ENCODE measurements at regions of chr14 and their contacts with region 1.

Region 1: GRCh38 chr14:95319312-95320021 is at the start of gene CLMN:
- DNase-seq: no peak
- H3K4me3 ChIP-seq: peak within 1 kb of the TSS; percentile 52 to 83 (median 78)
- H3K27ac ChIP-seq: peak within 1 kb of the TSS; percentile 54 to 77 (median 72)
- H3K4me1 ChIP-seq: peaks cover 0 to 27% (median 14%) of the 10 kb centered on the region in 4 donors
- H3K27me3 ChIP-seq: no peaks in the 10 kb centered on the region
- CTCF ChIP-seq: no peak
- EP300 ChIP-seq: no peak
- POLR2A ChIP-seq: no peak
- total RNA-seq, gene CLMN: 3.5 to 9.1 (median 5.1) TPM

Region 2: GRCh38 chr14:95157327-95158189 is 161.9 kb before region 1 on chr14 and contains the start of gene DICER1:
- intact Hi-C with region 1: loop called (anchors 5 kb)
- DNase-seq: peak; percentile 98
- H3K4me3 ChIP-seq: peak within 1 kb of the TSS; percentile 77 to 92 (median 86)
- H3K27ac ChIP-seq: peak within 1 kb of the TSS; percentile 87 to 96 (median 92)
- H3K4me1 ChIP-seq: peaks cover 0 to 51% (median 37%) of the 10 kb centered on the region in 4 donors
- H3K27me3 ChIP-seq: no peaks in the 10 kb centered on the region
- CTCF ChIP-seq: no peak
- EP300 ChIP-seq: no peak
- POLR2A ChIP-seq: peak in 1 of 2 donors; percentile 67
- total RNA-seq, gene DICER1: 44.9 to 77.0 (median 51.1) TPM

Region 3: GRCh38 chr14:95222151-95222631 is 97.3 kb before region 1 on chr14:
- intact Hi-C with region 1: no loop called
- DNase-seq: peak; percentile 66
- H3K4me3 ChIP-seq: peak overlapping the region in 1 of 4 donors; percentile 9
- H3K27ac ChIP-seq: peak overlapping the region in 2 of 4 donors; percentile 41 to 45
- H3K4me1 ChIP-seq: peaks cover 0 to 18% (median 12%) of the 10 kb centered on the region in 4 donors
- H3K27me3 ChIP-seq: no peaks in the 10 kb centered on the region
- CTCF ChIP-seq: no peak
- EP300 ChIP-seq: no peak
- POLR2A ChIP-seq: no peak

Region 4: DNA sequence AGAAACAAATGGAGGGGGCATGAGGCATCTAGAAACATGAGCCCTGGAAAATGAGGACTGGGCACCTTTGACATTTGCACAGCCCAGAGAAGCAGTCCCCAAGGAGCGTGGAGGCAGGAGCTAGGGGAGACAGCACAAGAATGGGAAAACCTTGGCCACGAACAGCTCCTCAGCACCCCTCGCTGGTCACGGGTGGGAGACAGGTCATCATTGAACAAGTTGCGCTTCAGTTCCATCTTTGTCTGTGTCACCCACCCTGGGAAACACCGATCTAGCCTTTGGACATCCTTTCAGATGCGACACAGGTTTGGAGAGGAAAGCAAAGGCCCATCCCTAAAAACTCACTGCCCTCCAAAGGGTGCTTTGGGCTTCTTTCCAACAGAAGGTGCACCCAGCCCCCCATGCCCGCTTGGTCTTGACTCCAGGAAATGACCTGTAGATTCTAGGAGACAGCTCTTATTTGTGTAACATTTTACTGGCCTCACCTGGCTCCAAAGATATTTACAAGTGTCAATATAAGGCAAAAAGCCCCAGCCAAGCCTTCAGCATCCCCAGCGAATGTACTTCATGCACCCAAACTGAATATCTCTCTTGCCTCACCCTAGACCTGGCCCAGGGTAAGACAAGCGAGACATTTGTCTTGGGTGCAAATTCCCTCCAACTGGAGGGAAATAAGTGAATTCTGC is 29.1 kb after region 1 on chr14:
- intact Hi-C with region 1: no loop called
- DNase-seq: no peak
- H3K4me3 ChIP-seq: no peak overlapping the region
- H3K27ac ChIP-seq: no peak overlapping the region
- H3K4me1 ChIP-seq: no peaks in the 10 kb centered on the region
- H3K27me3 ChIP-seq: no peaks in the 10 kb centered on the region
- CTCF ChIP-seq: no peak
- EP300 ChIP-seq: no peak
- POLR2A ChIP-seq: no peak

Region 5: DNA sequence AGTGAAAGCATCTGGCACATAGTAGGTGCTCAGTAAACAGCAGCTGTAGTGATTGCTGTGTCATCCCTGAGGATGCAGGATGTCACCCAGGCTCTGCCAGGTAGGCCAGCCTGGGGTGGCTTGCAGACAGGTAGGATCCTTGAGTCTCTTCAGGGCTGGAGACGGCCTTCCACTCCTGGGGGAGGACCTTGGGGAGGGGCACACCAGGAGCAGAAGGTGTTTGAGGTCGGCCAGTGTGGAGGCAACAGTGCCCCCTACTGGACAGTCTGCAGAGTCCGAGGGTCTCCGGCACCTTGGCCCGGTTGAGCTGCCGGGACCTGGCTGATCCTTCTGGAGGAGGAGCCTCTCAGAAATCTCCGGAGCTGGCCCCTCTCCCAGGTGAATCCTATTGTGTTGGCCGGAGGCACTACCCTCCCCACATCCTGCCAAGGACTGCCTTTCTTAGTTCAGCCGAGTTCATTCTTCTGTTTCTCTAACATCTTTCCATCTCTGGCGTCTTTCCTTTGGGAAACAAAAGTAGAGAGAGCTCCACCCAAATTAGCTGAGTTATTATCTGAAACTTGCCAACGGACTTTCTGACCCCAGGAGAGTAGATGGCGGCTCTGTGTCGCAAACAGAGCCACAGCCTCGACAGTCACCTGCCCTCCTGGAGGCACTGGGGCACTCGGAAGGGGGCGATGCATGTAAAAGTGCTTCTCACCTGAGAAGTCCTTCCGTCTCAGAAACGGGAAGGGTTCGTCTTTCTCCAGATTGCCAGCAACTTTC is 42.1 kb after region 1 on chr14:
- intact Hi-C with region 1: no loop called
- DNase-seq: no peak
- H3K4me3 ChIP-seq: no peak overlapping the region
- H3K27ac ChIP-seq: no peak overlapping the region
- H3K4me1 ChIP-seq: no peaks in the 10 kb centered on the region
- H3K27me3 ChIP-seq: peaks cover 0 to 32% (median 0%) of the 10 kb centered on the region in 3 donors
- CTCF ChIP-seq: peak in 2 of 4 experiments; percentile 29 to 34
- EP300 ChIP-seq: no peak
- POLR2A ChIP-seq: no peak

Region 6: DNA sequence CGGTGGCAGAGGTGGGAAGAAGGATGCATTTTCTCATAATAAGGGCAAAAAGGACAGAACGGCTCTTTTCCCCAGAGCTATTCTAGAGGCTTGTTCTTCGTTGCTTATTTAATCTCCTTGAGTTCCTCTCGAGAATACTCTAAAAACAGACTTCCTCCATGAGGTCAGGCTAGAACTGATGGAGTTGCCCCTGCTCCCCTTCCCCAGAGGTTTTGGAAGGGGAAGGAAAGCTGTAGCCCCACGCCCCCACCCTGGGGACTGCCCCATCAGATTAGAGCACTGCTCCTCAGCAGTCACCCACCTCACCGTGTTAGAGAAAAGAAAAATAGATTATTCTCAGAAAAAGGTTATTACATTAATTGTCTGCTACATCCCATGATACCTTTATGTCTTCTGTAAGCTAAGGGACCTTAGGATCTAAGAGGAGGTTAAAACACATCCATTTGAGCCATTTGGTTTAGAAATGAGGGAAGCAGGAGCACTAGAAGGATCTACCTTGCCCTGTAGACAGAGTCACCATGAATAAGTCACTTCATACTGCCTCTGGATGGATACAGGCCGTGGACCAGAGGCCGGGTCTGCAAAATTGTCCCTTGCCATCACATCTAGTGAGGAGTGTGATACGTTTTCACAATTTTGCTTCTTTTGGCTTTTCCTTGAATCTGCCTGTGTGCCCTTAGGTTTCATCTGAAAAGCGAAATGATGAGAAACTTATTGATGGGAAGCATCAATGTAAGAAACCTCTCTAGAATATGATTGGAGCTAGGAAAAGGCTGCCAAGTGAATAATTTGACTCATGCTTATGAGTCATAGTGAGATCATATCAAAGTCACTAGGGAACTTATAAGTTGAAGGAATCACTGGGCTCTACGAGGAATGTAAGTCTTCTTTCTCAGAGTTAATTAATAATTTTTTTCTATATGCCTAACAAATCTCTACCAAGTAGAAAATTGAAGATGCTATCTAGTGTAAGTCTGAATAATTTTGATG is 226.0 kb after region 1 on chr14:
- intact Hi-C with region 1: no loop called
- DNase-seq: no peak
- H3K4me3 ChIP-seq: no peak overlapping the region
- H3K27ac ChIP-seq: no peak overlapping the region
- H3K4me1 ChIP-seq: no peaks in the 10 kb centered on the region
- H3K27me3 ChIP-seq: no peaks in the 10 kb centered on the region
- CTCF ChIP-seq: no peak
- EP300 ChIP-seq: no peak
- POLR2A ChIP-seq: no peak

Measured in sigmoid colon (tissue), 7 donors.